ENCODE measurements at regions of chr2 and their contacts with region 1.

Region 1: GRCh38 chr2:86263715-86264562 is 64.7 kb downstream of the MRPL35 start:
- DNase-seq: no peak
- ATAC-seq: no peak
- H3K4me3 ChIP-seq: no peak overlapping the region
- H3K27ac ChIP-seq: no peak overlapping the region
- H3K4me1 ChIP-seq: no peaks in the 10 kb centered on the region
- H3K27me3 ChIP-seq: peaks cover 14% of the 10 kb centered on the region
- CTCF ChIP-seq: no peak
- POLR2A ChIP-seq: no peak
- RAD21 ChIP-seq: no peak

Region 2: DNA sequence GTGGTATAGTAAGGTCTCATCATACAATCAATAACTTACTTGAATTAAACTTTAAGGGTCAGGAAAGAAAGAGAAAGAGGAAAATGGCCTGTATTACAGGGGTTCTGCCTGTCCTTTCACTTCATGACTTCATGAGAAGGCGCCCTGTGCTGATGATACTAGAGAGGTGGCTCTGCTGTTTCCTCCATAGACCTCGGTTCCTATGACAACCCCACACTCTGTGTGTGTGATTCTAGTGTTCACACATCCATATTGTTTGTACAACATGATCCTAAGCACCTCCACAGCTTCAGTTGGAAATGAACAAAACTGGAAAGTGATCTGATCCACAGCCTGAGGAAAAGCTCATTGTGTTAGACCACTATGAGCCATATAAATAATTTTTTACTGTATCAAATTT is 80.5 kb after region 1 on chr2:
- CTCF ChIA-PET with region 1: no interaction called
- POLR2A ChIA-PET with region 1: no interaction called
- dilution Hi-C with region 1: no loop called
- in situ Hi-C with region 1: no loop called
- intact Hi-C with region 1: loop called (anchors 10 kb)
- DNase-seq: no peak
- ATAC-seq: no peak
- H3K4me3 ChIP-seq: no peak overlapping the region
- H3K27ac ChIP-seq: no peak overlapping the region
- H3K4me1 ChIP-seq: no peaks in the 10 kb centered on the region
- H3K27me3 ChIP-seq: peaks cover 12% of the 10 kb centered on the region
- CTCF ChIP-seq: no peak
- POLR2A ChIP-seq: no peak
- RAD21 ChIP-seq: no peak

Measured in IMR-90 (cell line).